Activated CD4-positive, alpha-beta T cell treated with anti-CD3 and anti-CD28 coated beads for 36 hours (primary cell): ENCODE measurements at regions of chr3 and their contacts with region 1.

Region 1: DNA sequence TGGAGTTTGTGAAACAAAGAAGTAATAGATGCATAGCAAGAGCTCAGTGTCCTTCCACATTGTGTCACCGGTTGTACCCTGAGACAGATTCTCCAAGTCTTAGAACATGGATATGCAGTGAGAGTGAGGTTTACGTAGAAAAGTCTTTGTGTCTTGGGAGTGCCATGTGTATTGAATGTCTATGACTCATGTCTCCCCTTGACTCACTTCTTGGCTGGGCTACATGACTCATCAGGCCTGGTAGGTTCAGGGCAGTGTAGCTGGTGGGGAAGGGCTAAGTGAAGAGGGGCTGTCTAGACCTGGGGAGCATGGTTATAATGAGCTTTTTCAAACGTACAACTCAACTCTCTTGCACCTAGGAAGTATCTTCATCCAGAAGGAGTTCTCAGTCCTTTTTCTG is 167.4 kb downstream of the GAP43 start:
- DNase-seq: peak; percentile 75
- ATAC-seq: peak; percentile 95
- H3K4me3 Mint-ChIP-seq: no peak overlapping the region
- H3K27ac Mint-ChIP-seq: peak overlapping the region; percentile 25
- H3K4me1 Mint-ChIP-seq: peaks cover 33% of the 10 kb centered on the region
- H3K27me3 Mint-ChIP-seq: no peaks in the 10 kb centered on the region

Region 2: DNA sequence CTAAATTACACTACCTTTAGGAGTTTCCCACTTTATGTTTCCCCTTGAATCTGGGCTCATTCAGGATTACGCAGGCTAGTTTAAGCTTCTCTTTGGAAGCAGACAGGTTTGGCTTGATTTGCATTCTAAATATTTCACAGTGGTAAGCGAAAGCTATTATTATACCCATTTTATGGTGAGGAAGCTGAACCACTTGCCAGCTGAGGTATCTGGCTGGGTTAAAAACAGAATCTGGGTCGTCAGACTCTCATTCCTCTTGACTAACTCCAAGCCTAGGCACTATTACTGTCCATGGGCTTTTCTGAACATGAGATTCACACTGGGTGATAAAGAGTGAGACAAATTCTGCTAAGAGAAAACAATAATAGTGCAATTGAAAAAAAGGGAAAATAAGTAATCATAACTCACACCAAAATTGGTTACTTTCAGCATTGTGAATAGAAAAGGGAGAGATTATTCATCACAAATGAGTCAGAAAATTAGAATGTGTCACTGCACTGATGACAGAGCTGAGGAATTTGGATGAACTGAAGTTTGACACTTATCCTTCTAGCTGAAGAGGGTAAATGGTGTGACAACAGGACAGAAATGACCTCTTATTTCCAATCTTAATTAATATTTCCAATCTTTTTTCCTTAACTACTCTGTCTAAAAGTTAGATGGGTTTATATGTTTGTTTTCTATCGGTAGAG is 1285.7 kb before region 1 on chr3:
- CTCF ChIA-PET with region 1: no interaction called
- POLR2A ChIA-PET with region 1: no interaction called
- intact Hi-C with region 1: loop called in 1 of 2 experiments (anchors 5 kb)
- DNase-seq: no peak
- ATAC-seq: peak; percentile 94
- H3K4me3 Mint-ChIP-seq: no peak overlapping the region
- H3K27ac Mint-ChIP-seq: no peak overlapping the region
- H3K4me1 Mint-ChIP-seq: peaks cover 40% of the 10 kb centered on the region
- H3K27me3 Mint-ChIP-seq: peaks cover 19% of the 10 kb centered on the region